Posterior cingulate gyrus (tissue), 11 donors: ENCODE measurements at regions of chr4 and their contacts with region 1.

Region 1: DNA sequence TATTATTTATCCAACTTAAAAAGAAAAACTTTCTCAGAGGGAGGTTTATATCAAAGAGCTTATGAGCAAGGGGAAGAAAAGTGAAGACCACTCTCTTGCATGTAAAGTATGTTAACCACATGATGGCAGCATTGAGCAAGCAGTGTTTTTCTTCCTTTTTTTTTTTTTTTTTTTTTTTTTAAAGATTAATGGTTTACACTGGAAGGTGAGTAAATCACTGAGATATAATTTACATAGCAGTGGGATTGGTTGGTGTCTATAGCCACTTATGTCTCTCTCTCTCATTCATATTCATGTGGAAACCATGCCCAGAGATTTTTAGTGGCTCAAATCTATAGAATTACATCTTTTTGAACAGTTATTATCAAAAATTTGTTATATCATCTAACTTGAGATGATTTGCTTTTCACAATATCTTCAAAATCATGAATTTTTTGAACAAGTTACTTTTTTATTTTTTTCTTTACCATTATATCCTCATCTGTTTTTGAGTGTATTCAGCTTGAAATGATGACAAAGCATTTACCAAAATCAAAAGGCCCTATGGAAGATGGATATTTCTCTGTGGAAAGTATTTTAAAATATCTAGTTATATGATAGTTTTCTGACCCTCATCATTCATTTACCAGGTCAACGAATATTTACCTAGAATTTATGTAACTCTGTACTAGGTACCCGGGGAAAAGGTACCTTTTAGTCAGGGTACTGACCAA is 31.6 kb downstream of the MTHFD2L start:
- DNase-seq: no peak

Region 2: DNA sequence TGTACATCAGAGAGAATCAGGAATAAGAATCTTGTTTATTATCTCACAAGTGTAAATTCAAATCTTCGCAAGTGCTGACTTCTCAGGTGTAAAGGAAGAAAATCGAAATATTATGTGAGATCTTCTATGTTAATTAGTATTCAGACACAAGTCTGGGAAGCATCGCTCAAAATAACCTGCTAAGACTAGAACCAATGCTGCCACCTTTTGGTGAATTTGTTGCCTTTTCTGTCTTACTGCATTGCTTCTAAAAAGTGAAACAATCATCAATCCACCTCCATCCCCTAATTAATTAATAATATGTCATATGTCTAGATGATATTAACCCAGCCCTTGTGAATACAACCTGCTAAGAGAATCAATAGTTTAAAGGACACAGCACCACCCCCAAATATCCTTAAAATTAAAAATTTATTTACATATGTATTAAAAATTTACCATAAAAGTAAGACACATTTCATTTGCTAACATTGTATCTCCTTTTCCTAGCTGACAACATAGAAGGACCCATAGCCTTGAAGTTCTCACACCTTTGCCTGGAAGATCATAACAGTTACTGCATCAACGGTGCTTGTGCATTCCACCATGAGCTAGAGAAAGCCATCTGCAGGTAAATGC is 122.3 kb after region 1 on chr4:
- intact Hi-C with region 1: loop called (anchors 2 kb)
- DNase-seq: peak in 1 of 10 donors; percentile 12